Activated CD4-positive, alpha-beta memory T cell treated with anti-CD3 and anti-CD28 coated beads, Interleukin-2, amount 10 ng/mL, durations not matched to agents 7 days and 5 days (primary cell): ENCODE measurements at regions of chr12 and their contacts with region 1.

Region 1: GRCh38 chr12:9049520-9050133 is 60.3 kb downstream of the KLRG1 start:
- DNase-seq: no peak
- H3K4me3 Mint-ChIP-seq: no peak overlapping the region
- H3K27ac Mint-ChIP-seq: no peak overlapping the region
- H3K4me1 Mint-ChIP-seq: peaks cover 16% of the 10 kb centered on the region
- H3K27me3 Mint-ChIP-seq: no peaks in the 10 kb centered on the region

Region 2: DNA sequence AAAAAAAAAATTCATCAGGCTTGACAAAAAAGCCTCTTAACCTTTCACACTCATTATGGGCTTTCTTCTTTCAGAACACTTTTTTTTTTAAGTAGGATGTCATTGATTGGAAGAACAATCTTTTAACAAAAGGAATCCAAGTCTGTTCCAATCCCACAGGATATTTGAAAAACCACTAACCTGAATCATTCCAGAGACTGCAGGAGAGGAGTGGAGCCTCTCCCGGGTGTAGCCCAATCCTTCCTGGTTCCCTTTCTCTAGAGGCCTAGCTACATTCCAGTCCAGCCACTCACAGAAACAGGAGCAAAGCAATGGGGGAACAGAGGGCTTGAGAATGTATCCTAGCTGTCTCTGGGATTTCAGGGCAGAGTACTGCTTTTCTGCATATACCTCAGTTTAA is 391.3 kb before region 1 on chr12:
- CTCF ChIA-PET with region 1: interaction called, 22 read pairs
- POLR2A ChIA-PET with region 1: no interaction called
- DNase-seq: no peak
- H3K4me3 Mint-ChIP-seq: no peak overlapping the region
- H3K27ac Mint-ChIP-seq: no peak overlapping the region
- H3K4me1 Mint-ChIP-seq: no peaks in the 10 kb centered on the region
- H3K27me3 Mint-ChIP-seq: peaks cover 21% of the 10 kb centered on the region

Region 3: GRCh38 chr12:8890313-8891085 is 159.1 kb before region 1 on chr12:
- CTCF ChIA-PET with region 1: interaction called, 26 read pairs
- POLR2A ChIA-PET with region 1: no interaction called
- DNase-seq: peak; percentile 59
- H3K4me3 Mint-ChIP-seq: peak overlapping the region; percentile 71
- H3K27ac Mint-ChIP-seq: no peak overlapping the region
- H3K4me1 Mint-ChIP-seq: peaks cover 3% of the 10 kb centered on the region
- H3K27me3 Mint-ChIP-seq: peaks cover 2% of the 10 kb centered on the region

Region 4: DNA sequence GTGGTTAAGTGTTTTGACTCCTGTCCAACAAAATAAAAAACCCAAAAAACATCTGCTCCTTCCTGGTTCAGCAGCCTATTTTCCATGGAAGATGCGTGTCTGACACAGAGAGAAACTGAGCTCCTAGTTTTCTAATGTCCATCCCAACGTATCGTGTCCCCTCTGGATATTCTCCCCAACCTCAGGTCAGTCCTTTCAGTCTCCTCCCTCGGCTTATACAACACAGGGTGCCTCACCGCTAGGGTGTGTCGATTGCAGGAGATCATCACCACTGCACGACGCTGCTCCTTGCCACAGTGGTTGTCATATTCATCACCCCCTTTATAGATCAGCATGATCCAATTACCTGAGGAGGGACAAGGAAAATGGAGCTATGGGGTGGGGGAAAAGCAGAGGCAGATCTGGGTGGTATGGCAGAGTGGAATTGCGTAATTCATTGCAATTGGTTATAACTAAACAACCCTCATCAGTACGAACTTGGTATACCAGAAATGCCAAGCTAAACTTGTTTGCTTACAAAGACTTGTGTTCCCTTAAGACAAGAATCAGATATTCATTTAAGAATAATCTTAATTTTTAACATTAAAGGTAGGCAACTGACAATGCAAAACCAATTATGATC is 106.0 kb before region 1 on chr12:
- CTCF ChIA-PET with region 1: interaction called, 82 read pairs
- POLR2A ChIA-PET with region 1: interaction called, 24 read pairs
- DNase-seq: no peak
- H3K4me3 Mint-ChIP-seq: no peak overlapping the region
- H3K27ac Mint-ChIP-seq: no peak overlapping the region
- H3K4me1 Mint-ChIP-seq: peaks cover 26% of the 10 kb centered on the region
- H3K27me3 Mint-ChIP-seq: no peaks in the 10 kb centered on the region

Region 5: DNA sequence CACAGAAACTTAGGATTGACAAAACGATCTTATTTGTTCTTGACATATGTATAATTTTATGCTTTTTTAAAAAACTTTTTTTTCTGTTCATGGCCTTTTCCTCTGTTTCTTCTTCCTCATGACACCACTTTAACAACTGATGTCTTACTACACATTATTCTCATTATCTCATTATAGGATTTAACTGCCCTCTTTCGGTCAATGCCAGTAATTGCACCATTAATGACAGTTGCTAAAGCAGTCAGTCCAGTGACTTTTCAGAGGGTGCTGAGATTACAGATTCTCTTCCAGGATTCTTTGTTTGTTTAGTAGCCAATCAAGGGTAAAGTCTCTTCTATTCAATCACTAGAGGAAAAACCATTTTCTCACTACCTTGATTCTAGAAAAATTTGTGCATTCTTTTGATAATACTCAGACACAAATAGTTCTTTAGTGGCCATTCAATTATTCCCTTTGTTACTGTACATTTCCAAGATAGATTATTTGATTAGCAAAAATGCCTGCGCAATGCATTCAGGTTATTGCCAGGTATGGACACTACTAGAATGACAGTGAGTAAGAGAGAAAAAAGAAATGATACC is 10.1 kb before region 1 on chr12:
- CTCF ChIA-PET with region 1: interaction called, 11 read pairs
- POLR2A ChIA-PET with region 1: no interaction called
- DNase-seq: no peak
- H3K4me3 Mint-ChIP-seq: no peak overlapping the region
- H3K27ac Mint-ChIP-seq: no peak overlapping the region
- H3K4me1 Mint-ChIP-seq: peaks cover 26% of the 10 kb centered on the region
- H3K27me3 Mint-ChIP-seq: no peaks in the 10 kb centered on the region